CD4-positive, alpha-beta T cell (primary cell): ENCODE measurements at regions of chr2 and their contacts with region 1.

Region 1: GRCh38 chr2:58727981-58728656 is 487.0 kb upstream of the FANCL start:
- DNase-seq: no peak
- ATAC-seq: no peak
- H3K4me3 ChIP-seq: no peak overlapping the region
- H3K4me3 Mint-ChIP-seq: no peak overlapping the region
- H3K27ac ChIP-seq: no peak overlapping the region
- H3K27ac Mint-ChIP-seq: no peak overlapping the region
- H3K4me1 ChIP-seq: no peaks in the 10 kb centered on the region
- H3K4me1 Mint-ChIP-seq: peaks cover 7% of the 10 kb centered on the region
- H3K27me3 ChIP-seq: no peaks in the 10 kb centered on the region
- H3K27me3 Mint-ChIP-seq: no peaks in the 10 kb centered on the region
- CTCF ChIP-seq: no peak

Region 2: GRCh38 chr2:58851598-58851997 is 123.5 kb after region 1 on chr2:
- CTCF ChIA-PET with region 1: no interaction called
- POLR2A ChIA-PET with region 1: no interaction called
- intact Hi-C with region 1: no loop called
- DNase-seq: no peak
- ATAC-seq: no peak
- H3K4me3 ChIP-seq: no peak overlapping the region
- H3K4me3 Mint-ChIP-seq: no peak overlapping the region
- H3K27ac ChIP-seq: no peak overlapping the region
- H3K27ac Mint-ChIP-seq: no peak overlapping the region
- H3K4me1 ChIP-seq: no peaks in the 10 kb centered on the region
- H3K4me1 Mint-ChIP-seq: no peaks in the 10 kb centered on the region
- H3K27me3 ChIP-seq: no peaks in the 10 kb centered on the region
- H3K27me3 Mint-ChIP-seq: no peaks in the 10 kb centered on the region
- CTCF ChIP-seq: no peak

Region 3: DNA sequence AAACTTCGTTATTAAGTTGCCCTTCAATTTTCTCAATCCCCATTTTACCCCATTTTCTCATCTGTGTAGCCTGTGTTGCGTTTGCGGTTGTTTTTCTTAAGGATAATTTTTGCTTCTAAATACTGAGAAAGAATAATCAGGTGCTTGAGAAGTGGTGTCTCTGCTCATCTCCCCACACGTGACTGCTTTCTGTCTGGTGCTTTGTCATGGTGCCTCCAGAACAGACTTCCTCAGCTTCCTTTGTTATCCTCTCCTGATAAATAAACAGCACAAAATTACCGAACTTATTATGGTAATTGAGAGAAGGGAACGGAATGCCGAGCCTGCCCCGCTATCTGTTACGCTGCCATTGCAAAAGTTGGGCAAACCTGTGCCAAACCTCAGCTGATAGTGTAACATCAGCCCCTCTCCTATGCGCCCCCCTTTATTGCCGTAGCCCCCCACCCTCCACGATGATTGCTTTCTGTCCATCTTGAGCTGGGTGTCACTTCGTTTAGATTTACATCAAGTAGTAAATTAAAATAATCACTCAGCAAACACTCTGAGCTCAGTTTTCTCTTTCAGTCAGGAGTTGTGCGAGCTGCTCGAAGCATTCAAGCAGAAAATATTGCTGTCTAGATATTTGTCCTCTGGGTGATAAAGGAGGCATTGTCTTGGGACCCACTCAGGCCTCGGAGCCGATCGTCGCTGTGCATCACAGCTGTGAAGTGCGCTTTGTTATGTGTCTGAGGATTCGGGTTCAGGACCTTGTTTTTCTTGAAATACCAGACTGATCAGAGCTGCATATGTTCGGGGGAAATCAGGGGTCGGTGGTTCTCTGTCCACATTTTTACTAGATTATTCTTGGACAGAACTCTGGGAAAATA is 521.6 kb after region 1 on chr2:
- CTCF ChIA-PET with region 1: no interaction called
- POLR2A ChIA-PET with region 1: no interaction called
- intact Hi-C with region 1: loop called in 1 of 2 experiments (anchors 10 kb)
- DNase-seq: no peak
- ATAC-seq: no peak
- H3K4me3 ChIP-seq: no peak overlapping the region
- H3K4me3 Mint-ChIP-seq: no peak overlapping the region
- H3K27ac ChIP-seq: no peak overlapping the region
- H3K27ac Mint-ChIP-seq: no peak overlapping the region
- H3K4me1 ChIP-seq: no peaks in the 10 kb centered on the region
- H3K4me1 Mint-ChIP-seq: no peaks in the 10 kb centered on the region
- H3K27me3 ChIP-seq: no peaks in the 10 kb centered on the region
- H3K27me3 Mint-ChIP-seq: no peaks in the 10 kb centered on the region
- CTCF ChIP-seq: no peak